HCT116 (cell line): ENCODE measurements at regions of chr14 and their contacts with region 1.

Region 1: GRCh38 chr14:70086685-70087379 is 101.9 kb downstream of the SLC8A3 start:
- DNase-seq: peak; percentile 23
- ATAC-seq: peak; percentile 83
- H3K4me3 ChIP-seq: no peak overlapping the region
- H3K27ac ChIP-seq: no peak overlapping the region
- H3K4me1 ChIP-seq: no peaks in the 10 kb centered on the region
- H3K27me3 ChIP-seq: peaks cover 60% of the 10 kb centered on the region
- CTCF ChIP-seq: peak; percentile 54 to 69 (median 60); a peak in 5 of 6 replicates
- POLR2A ChIP-seq: no peak
- RAD21 ChIP-seq: peak; percentile 62

Region 2: DNA sequence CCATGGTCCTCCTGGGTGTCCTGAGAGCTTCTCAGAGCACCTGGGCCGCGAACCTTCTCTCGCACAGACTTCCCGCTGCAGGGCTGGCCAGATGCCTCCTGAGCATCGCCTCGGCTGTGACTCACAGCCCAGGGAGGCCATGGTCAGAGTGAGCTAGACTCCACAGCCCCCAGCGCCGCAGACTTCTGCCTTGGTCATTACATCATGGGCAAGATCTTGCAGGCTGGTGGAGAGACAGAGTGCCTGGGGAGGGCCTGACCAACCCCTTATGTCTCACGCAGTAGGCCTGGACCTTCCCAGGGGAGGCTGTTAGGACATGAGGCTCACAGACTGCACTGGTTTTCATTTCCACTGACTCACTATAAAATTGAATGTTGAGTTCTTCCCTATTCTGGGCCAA is 165.8 kb before region 1 on chr14:
- CTCF ChIA-PET with region 1: no interaction called
- POLR2A ChIA-PET with region 1: no interaction called
- RAD21 ChIA-PET with region 1: no interaction called
- intact Hi-C with region 1: no loop called
- DNase-seq: no peak
- ATAC-seq: no peak
- H3K4me3 ChIP-seq: no peak overlapping the region
- H3K27ac ChIP-seq: no peak overlapping the region
- H3K4me1 ChIP-seq: no peaks in the 10 kb centered on the region
- H3K27me3 ChIP-seq: peaks cover 34% of the 10 kb centered on the region
- CTCF ChIP-seq: no peak
- POLR2A ChIP-seq: no peak
- RAD21 ChIP-seq: no peak

Region 3: DNA sequence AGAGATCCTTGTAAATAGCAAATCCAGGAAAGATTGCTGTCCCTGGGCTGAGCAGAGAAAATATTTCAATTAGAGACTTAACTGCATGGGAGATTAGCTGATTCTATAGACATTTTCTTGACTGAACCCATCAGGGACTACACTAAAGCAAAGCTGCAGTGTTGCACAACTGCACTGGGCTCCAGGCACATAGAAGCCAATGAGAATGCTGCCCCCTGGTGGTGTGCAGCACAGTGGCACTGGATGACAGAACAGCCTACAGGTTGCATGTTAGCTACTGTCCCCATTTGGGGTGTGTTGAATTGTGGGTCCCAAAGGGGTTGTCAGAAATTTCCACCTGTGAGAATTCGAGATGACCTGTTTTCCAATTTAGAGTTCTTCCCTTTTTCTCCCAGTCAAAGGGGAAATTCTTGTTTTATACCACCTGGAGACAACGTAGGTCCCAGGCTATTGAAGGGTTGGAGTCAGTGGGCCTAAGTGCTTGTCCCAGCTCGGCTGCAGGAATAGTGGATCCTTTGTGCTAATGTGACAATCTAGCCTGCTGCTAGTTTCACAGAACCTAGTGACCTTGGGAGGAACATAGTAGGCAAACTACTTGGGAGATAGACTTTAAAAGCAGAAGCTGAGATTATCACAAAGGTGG is 12.8 kb before region 1 on chr14:
- CTCF ChIA-PET with region 1: interaction called, 13 read pairs
- POLR2A ChIA-PET with region 1: no interaction called
- RAD21 ChIA-PET with region 1: no interaction called
- intact Hi-C with region 1: no loop called
- DNase-seq: peak; percentile 64
- ATAC-seq: peak; percentile 99
- H3K4me3 ChIP-seq: no peak overlapping the region
- H3K27ac ChIP-seq: no peak overlapping the region
- H3K4me1 ChIP-seq: no peaks in the 10 kb centered on the region
- H3K27me3 ChIP-seq: peaks cover 35% of the 10 kb centered on the region
- CTCF ChIP-seq: peak; percentile 79 to 98 (median 96)
- POLR2A ChIP-seq: no peak
- RAD21 ChIP-seq: peak; percentile 76

Region 4: GRCh38 chr14:70114621-70115156 is 27.9 kb after region 1 on chr14:
- CTCF ChIA-PET with region 1: no interaction called
- POLR2A ChIA-PET with region 1: no interaction called
- RAD21 ChIA-PET with region 1: no interaction called
- intact Hi-C with region 1: no loop called
- DNase-seq: no peak
- ATAC-seq: no peak
- H3K4me3 ChIP-seq: no peak overlapping the region
- H3K27ac ChIP-seq: no peak overlapping the region
- H3K4me1 ChIP-seq: no peaks in the 10 kb centered on the region
- H3K27me3 ChIP-seq: peaks cover 49% of the 10 kb centered on the region
- CTCF ChIP-seq: no peak
- POLR2A ChIP-seq: no peak
- RAD21 ChIP-seq: no peak

Region 5: DNA sequence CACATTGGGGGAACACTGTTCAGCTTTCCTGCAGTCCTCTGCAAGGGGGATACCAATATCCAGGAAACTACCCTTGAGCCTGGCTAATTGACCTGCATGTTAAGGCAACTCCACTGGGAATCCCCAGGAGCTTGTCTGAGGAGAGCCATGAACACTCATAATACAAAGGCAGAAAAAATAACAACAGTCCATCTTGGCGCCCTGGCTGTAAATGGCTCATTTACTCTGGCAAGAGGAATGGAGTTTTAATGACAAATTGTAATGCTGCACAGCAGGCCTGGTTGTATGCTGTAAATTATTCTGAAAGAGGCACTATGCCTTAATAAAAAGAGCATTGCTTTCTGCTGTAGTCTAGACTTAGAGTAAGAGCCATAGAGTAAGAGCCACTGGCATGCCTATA is 43.6 kb after region 1 on chr14:
- CTCF ChIA-PET with region 1: no interaction called
- POLR2A ChIA-PET with region 1: no interaction called
- RAD21 ChIA-PET with region 1: no interaction called
- intact Hi-C with region 1: no loop called
- DNase-seq: no peak
- ATAC-seq: no peak
- H3K4me3 ChIP-seq: no peak overlapping the region
- H3K27ac ChIP-seq: no peak overlapping the region
- H3K4me1 ChIP-seq: no peaks in the 10 kb centered on the region
- H3K27me3 ChIP-seq: peaks cover 61% of the 10 kb centered on the region
- CTCF ChIP-seq: no peak
- POLR2A ChIP-seq: no peak
- RAD21 ChIP-seq: no peak

Region 6: DNA sequence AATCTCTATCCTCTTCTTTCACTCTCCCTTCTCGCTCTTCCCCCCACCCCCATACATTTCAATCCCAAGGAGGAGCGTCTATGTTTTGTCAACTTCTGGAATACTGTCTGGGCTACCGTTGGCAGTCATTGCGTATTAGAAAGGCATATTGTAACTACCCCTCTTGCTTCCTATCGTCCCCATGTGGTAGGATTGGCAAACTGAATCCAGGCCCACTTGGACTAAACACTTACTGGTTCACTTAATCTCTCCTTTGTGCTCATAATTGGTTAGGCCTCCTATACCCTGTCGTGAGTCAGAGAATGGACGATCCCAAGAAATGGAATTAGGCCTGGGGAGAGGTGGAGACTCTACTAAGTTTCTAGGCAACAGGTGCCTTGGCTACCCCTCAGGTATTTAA is 170.7 kb after region 1 on chr14:
- CTCF ChIA-PET with region 1: interaction called, 3 read pairs
- POLR2A ChIA-PET with region 1: no interaction called
- RAD21 ChIA-PET with region 1: no interaction called
- intact Hi-C with region 1: loop called (anchors 1 kb)
- DNase-seq: peak; percentile 60
- ATAC-seq: peak; percentile 93
- H3K4me3 ChIP-seq: no peak overlapping the region
- H3K27ac ChIP-seq: no peak overlapping the region
- H3K4me1 ChIP-seq: peaks cover 0 to 4% of the 10 kb centered on the region in 2 experiments; a peak in 1 of 4 replicates
- H3K27me3 ChIP-seq: no peaks in the 10 kb centered on the region
- CTCF ChIP-seq: peak; percentile 37 to 85 (median 83); a peak in 5 of 6 replicates
- POLR2A ChIP-seq: no peak
- RAD21 ChIP-seq: peak; percentile 55

Region 7: DNA sequence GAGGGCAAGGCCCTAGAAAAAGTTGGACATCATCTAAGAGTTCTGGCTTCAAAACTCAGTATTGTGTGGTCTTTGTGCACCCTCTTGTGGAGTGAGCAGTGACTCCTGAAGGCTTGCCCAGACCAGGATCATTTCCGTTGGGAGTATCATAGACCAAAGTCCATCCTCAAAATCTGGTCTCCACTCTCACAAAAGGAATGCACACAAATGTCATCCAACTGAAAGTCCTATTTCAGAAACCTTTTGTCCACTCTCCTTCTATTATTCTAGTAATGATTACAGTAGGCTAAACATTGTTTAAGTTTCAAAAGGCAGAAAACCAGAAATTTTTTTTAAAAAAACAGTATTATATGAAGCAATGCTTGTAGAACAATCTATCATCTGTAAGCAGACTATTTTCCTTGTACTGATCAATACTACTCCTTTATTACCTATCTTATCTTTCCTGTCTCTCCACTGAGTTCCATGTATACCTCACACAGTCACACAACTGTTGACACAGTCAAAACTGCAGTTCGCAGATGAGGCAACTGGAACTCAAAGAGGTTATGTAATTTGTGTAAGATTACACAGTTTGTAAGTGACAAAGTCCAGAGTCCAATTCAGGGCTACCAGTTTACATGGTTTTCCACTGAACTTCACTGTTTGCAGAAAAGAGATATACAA is 231.3 kb after region 1 on chr14:
- CTCF ChIA-PET with region 1: interaction called, 4 read pairs
- POLR2A ChIA-PET with region 1: no interaction called
- RAD21 ChIA-PET with region 1: no interaction called
- intact Hi-C with region 1: loop called (anchors 1 kb)
- DNase-seq: peak; percentile 38
- ATAC-seq: peak; percentile 87
- H3K4me3 ChIP-seq: no peak overlapping the region
- H3K27ac ChIP-seq: no peak overlapping the region
- H3K4me1 ChIP-seq: no peaks in the 10 kb centered on the region
- H3K27me3 ChIP-seq: no peaks in the 10 kb centered on the region
- CTCF ChIP-seq: peak; percentile 45 to 62 (median 51); a peak in 5 of 6 replicates
- POLR2A ChIP-seq: no peak
- RAD21 ChIP-seq: peak; percentile 73

Region 8: DNA sequence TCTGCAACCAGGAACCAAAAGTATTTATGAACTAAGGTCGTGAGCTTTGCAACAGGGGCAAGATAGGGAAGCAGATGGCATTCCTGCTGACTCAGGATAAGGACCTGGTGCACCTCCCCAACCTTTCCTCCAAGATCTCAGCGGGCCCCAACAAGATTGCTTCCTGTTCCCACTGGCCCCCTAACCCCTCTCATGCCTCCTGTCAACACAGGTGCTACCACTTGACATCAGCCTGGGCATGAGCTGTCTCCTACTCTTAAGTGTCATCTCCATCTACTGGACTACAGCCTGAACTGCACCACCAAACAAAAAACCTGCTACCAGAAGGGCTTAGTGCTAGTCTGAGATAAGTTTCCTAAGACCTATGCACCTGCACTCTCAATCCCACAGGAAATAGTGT is 481.0 kb after region 1 on chr14:
- CTCF ChIA-PET with region 1: interaction called, 13 read pairs
- POLR2A ChIA-PET with region 1: no interaction called
- RAD21 ChIA-PET with region 1: no interaction called
- intact Hi-C with region 1: loop called (anchors 1 kb)
- DNase-seq: peak; percentile 28
- ATAC-seq: peak; percentile 91
- H3K4me3 ChIP-seq: no peak overlapping the region
- H3K27ac ChIP-seq: no peak overlapping the region
- H3K4me1 ChIP-seq: no peaks in the 10 kb centered on the region
- H3K27me3 ChIP-seq: no peaks in the 10 kb centered on the region
- CTCF ChIP-seq: peak; percentile 19 to 76 (median 72); a peak in 5 of 6 replicates
- POLR2A ChIP-seq: no peak
- RAD21 ChIP-seq: peak; percentile 61